ENCODE measurements at regions of chr10 and their contacts with region 1.

Region 1: GRCh38 chr10:95542330-95542729 is 18.8 kb downstream of the SORBS1 start:
- DNase-seq: no peak
- ATAC-seq: peak; percentile 70

Region 2: GRCh38 chr10:95513941-95514392 is 28.4 kb before region 1 on chr10:
- intact Hi-C with region 1: loop called (anchors 2 kb)
- DNase-seq: no peak
- ATAC-seq: peak; percentile 59